Colonic mucosa (tissue), 4 donors: ENCODE measurements at regions of chr6 and their contacts with region 1.

Region 1: DNA sequence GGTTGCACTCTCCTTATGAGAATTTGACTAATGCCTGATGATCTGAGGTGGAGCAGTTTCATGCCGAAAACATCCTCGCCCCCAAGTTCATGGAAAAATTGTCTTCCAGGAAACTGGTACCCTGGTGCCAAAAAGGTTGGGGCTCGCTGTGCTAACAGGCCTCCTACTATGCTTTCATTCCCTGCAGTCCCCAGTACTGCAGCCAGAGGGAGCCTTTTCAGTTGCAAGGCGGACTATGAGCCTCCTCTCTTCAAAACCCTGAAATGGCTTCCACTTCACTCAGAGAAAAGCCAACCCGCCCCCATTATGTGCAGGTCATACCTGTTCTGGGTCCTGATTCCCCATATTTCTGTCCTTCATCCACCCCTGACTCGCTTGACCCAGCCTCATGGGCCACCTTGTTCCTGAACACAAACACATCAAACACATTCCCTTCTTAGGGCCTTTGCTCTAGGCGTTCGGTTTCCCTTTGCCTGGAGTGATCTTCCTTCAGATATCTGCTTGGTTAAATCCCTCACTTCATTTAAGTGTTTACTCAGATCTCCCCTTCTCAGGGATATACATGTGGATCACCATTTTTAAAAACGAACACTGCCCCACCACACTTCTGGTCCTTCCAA is 173.7 kb downstream of the PHACTR1 start:
- DNase-seq: peak; percentile 28
- H3K4me3 ChIP-seq: no peak overlapping the region
- H3K27ac ChIP-seq: no peak overlapping the region
- H3K4me1 ChIP-seq: no peaks in the 10 kb centered on the region
- H3K27me3 ChIP-seq: no peaks in the 10 kb centered on the region
- CTCF ChIP-seq: peak; percentile 38

Region 2: DNA sequence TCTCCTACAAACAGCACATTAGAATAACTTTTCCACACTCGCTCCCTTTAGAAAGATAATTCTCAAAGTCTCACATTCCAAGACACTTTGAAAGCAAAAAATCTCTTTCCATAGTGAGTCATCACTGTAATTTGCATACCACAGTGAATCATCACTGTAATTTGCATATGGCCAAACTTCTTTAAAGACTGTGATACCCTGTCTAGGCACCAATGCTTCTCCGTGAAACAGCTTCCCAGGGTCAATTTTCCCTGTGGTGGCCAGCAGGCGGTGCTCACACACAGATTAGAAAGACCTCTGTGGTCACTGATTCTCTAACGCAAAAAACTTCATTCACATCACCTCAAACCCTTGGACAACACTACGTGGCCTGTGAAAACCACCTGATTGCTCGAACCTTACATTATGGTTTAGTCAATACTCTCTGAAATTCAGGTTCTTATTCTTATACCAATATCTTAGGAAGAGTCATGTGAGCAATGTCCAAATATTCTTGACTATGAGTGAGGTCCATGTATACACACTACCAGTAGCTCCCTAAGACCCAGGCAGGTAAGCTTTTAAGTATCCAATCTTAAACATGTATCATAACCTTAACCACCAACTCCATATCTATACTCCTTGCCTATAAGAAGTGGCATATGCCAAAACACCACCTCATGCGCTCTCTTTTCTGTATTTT is 252.2 kb before region 1 on chr6:
- intact Hi-C with region 1: loop called (anchors 5 kb)
- DNase-seq: peak; percentile 34
- H3K4me3 ChIP-seq: no peak overlapping the region
- H3K27ac ChIP-seq: no peak overlapping the region
- H3K4me1 ChIP-seq: no peaks in the 10 kb centered on the region
- H3K27me3 ChIP-seq: no peaks in the 10 kb centered on the region
- CTCF ChIP-seq: peak; percentile 43

Region 3: GRCh38 chr6:12769556-12770256 is 120.6 kb before region 1 on chr6:
- intact Hi-C with region 1: no loop called
- DNase-seq: no peak
- H3K4me3 ChIP-seq: no peak overlapping the region
- H3K27ac ChIP-seq: no peak overlapping the region
- H3K4me1 ChIP-seq: no peaks in the 10 kb centered on the region
- H3K27me3 ChIP-seq: no peaks in the 10 kb centered on the region
- CTCF ChIP-seq: no peak

Region 4: GRCh38 chr6:12977806-12978205 is 87.5 kb after region 1 on chr6:
- intact Hi-C with region 1: no loop called
- DNase-seq: no peak
- H3K4me3 ChIP-seq: no peak overlapping the region
- H3K27ac ChIP-seq: no peak overlapping the region
- H3K4me1 ChIP-seq: no peaks in the 10 kb centered on the region
- H3K27me3 ChIP-seq: no peaks in the 10 kb centered on the region
- CTCF ChIP-seq: no peak